K562 (cell line): ENCODE measurements at regions of chr14 and their contacts with region 1.

Region 1: GRCh38 chr14:90820958-90821357 is 4.7 kb upstream of the TTC7B start:
- DNase-seq: no peak
- ATAC-seq: no peak
- H3K4me3 ChIP-seq: no peak overlapping the region
- H3K27ac ChIP-seq: no peak overlapping the region
- H3K4me1 ChIP-seq: peaks cover 0 to 10% of the 10 kb centered on the region in 2 experiments; a peak in 2 of 5 replicates
- H3K27me3 ChIP-seq: no peaks in the 10 kb centered on the region
- CTCF ChIP-seq: no peak
- EP300 ChIP-seq: no peak
- POLR2A ChIP-seq: no peak
- RAD21 ChIP-seq: no peak

Region 2: DNA sequence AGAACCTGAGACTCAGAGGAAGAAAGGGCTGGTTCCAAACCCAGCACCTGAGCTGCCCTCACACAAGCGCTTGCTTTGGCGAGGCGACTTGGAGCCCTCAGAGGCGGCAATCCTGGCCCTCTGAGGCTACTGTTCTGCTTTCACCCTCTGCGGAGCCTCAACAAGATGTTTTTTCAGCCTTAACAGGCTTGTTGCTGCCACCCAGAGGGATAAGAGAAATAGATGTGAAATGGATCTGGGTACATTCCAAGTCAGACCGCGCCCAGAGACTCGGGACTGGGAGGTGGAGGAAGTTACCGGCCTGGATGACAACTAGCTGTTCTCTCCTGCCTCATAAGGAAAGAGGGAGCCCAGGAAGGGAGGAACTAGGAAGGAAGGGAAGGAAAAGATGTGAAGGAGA is 94.3 kb before region 1 on chr14:
- CTCF ChIA-PET with region 1: no interaction called
- POLR2A ChIA-PET with region 1: no interaction called
- in situ Hi-C with region 1: no loop called
- intact Hi-C with region 1: no loop called
- DNase-seq: no peak
- ATAC-seq: no peak
- H3K4me3 ChIP-seq: no peak overlapping the region
- H3K27ac ChIP-seq: no peak overlapping the region
- H3K4me1 ChIP-seq: no peaks in the 10 kb centered on the region; a peak in 1 of 5 replicates
- H3K27me3 ChIP-seq: no peaks in the 10 kb centered on the region
- CTCF ChIP-seq: no peak
- EP300 ChIP-seq: no peak
- POLR2A ChIP-seq: no peak
- RAD21 ChIP-seq: no peak

Region 3: DNA sequence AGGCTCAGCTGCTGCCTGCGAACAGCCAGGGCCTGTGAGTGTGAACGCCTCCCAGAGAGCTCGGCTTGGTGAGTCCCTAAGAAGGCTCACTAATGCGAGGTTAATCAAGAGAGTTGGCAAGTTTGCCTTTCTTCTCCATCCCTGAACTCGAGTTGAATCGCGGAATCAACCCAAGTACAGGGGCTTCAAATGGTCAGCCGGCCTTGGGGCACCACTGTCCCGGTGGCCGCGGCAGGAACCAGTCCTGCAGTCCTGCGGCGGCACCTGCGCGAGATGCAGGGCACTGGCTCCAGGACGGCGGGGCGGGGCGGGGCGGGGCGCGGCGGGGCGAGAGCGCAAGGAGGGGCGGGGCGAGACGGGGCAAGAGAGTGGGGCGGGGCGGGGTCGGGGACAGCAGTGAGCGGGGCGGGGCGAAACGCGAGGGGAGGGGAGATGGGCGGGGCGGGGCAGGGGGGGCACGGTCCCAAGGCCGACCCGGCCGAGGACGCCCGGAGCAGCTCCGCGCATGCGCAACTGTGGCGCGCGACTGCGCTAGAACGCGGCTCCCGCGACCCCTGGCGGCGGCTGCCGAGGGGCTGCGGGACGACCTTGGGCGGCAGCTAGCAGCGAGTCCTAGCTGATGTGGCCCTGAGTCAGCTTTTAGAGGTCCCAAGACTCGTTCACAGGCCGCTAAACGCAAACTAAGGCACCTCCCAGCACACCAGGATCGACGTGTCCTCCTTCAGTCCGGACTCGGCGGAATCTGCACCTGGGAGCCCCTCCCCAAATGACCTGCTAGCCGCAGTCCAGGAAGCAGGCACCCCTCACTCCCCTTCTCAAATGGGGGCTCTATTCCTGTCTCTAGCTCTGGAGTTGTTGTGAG is 62.7 kb before region 1 on chr14:
- CTCF ChIA-PET with region 1: no interaction called
- POLR2A ChIA-PET with region 1: interaction called, 3 read pairs
- in situ Hi-C with region 1: loop called (anchors 5 kb)
- intact Hi-C with region 1: no loop called
- DNase-seq: peak; percentile 92 to 98 (median 98)
- ATAC-seq: peak; percentile 98
- H3K4me3 ChIP-seq: peak overlapping the region; percentile 28; the same call in 1 of the 2 replicates
- H3K27ac ChIP-seq: peak overlapping the region; percentile 87
- H3K4me1 ChIP-seq: peaks cover 10 to 12% of the 10 kb centered on the region in 2 experiments; a peak in 4 of 5 replicates
- H3K27me3 ChIP-seq: no peaks in the 10 kb centered on the region
- CTCF ChIP-seq: peak; percentile 78 to 86 (median 84)
- EP300 ChIP-seq: 0 out of 2 replicates have a peak, but pooled peaks have one; percentile 21
- POLR2A ChIP-seq: 0 out of 2 replicates have a peak, but pooled peaks have one; percentile 37
- RAD21 ChIP-seq: peak; percentile 43 to 64